Calu3 (cell line): ENCODE measurements at regions of chr5 and their contacts with region 1.

Region 1: DNA sequence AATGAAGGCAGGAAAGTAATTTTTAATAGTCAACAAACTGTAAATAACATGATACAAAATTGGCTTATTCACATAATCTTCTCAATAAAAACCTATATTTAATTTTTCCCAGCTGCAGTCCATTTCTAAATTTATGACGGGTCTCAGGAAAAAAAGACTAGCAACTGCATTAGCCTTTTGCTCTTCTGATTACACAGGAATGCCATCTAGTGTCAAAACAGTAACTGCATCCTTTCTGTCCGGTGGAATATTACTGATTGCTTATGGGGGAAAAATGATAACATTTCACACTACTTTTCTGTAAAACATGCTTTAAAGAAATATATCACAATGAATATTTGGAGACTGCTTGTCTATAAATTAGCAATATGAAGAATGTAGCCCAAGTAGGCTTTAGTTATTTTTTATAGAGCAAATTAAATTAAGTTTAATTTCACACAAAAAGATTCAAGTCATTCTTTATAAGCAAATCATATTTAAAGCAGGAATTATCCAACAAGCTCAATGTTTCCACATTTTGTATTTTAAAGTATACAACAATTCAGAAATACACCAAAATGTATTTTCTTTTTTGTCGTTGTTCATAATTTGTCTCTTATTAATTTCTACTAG is 534.7 kb downstream of the CDH10 start:
- DNase-seq: no peak
- H3K4me3 Mint-ChIP-seq: no peak overlapping the region
- H3K27ac Mint-ChIP-seq: no peak overlapping the region
- H3K4me1 Mint-ChIP-seq: no peaks in the 10 kb centered on the region
- H3K27me3 Mint-ChIP-seq: no peaks in the 10 kb centered on the region
- CTCF ChIP-seq: no peak

Region 2: GRCh38 chr5:23820765-23821471 is 289.2 kb before region 1 on chr5:
- CTCF ChIA-PET with region 1: interaction called, 6 read pairs
- intact Hi-C with region 1: loop called (anchors 1 kb)
- DNase-seq: peak; percentile 8
- H3K4me3 Mint-ChIP-seq: no peak overlapping the region
- H3K27ac Mint-ChIP-seq: no peak overlapping the region
- H3K4me1 Mint-ChIP-seq: peaks cover 8% of the 10 kb centered on the region
- H3K27me3 Mint-ChIP-seq: no peaks in the 10 kb centered on the region
- CTCF ChIP-seq: peak; percentile 25

Region 3: GRCh38 chr5:23994581-23995370 is 115.3 kb before region 1 on chr5:
- CTCF ChIA-PET with region 1: no interaction called
- intact Hi-C with region 1: loop called (anchors 5 kb)
- DNase-seq: no peak
- H3K4me3 Mint-ChIP-seq: peak overlapping the region; percentile 45
- H3K27ac Mint-ChIP-seq: peak overlapping the region; percentile 32
- H3K4me1 Mint-ChIP-seq: peaks cover 16% of the 10 kb centered on the region
- H3K27me3 Mint-ChIP-seq: no peaks in the 10 kb centered on the region
- CTCF ChIP-seq: no peak

Region 4: DNA sequence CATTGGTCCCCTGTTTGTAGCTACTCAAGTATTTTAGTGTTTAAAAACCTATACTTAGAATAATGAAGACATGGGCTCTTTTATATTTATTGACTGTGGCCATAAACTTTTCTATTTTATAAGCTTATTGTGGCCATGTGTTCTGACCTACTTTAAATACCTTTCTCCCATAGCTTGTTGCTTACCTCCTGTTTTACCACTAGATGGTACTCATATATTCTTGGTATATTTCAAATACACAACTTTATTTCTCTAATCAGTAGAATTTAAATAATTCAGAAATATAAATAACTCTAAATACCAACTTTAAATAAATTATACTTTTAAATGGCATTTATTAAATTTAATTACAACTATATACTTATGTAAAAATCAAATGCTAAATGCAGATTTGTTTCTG is 104.7 kb before region 1 on chr5:
- CTCF ChIA-PET with region 1: no interaction called
- intact Hi-C with region 1: loop called (anchors 1 kb)
- DNase-seq: no peak
- H3K4me3 Mint-ChIP-seq: no peak overlapping the region
- H3K27ac Mint-ChIP-seq: no peak overlapping the region
- H3K4me1 Mint-ChIP-seq: no peaks in the 10 kb centered on the region
- H3K27me3 Mint-ChIP-seq: no peaks in the 10 kb centered on the region
- CTCF ChIP-seq: no peak